Activated naive CD4-positive, alpha-beta T cell treated with anti-CD3 and anti-CD28 coated beads for 36 hours (primary cell): ENCODE measurements at regions of chr17 and their contacts with region 1.

Region 1: GRCh38 chr17:79839363-79840268 is at the start of gene CBX4:
- DNase-seq: peak; percentile 91
- H3K4me3 Mint-ChIP-seq: peak within 1 kb of the TSS; percentile 88
- H3K27ac Mint-ChIP-seq: peak within 1 kb of the TSS; percentile 78
- H3K4me1 Mint-ChIP-seq: peaks cover 58% of the 10 kb centered on the region
- H3K27me3 Mint-ChIP-seq: peaks cover 31% of the 10 kb centered on the region
- total RNA-seq, gene CBX4: 22.7 to 26.3 TPM

Region 2: DNA sequence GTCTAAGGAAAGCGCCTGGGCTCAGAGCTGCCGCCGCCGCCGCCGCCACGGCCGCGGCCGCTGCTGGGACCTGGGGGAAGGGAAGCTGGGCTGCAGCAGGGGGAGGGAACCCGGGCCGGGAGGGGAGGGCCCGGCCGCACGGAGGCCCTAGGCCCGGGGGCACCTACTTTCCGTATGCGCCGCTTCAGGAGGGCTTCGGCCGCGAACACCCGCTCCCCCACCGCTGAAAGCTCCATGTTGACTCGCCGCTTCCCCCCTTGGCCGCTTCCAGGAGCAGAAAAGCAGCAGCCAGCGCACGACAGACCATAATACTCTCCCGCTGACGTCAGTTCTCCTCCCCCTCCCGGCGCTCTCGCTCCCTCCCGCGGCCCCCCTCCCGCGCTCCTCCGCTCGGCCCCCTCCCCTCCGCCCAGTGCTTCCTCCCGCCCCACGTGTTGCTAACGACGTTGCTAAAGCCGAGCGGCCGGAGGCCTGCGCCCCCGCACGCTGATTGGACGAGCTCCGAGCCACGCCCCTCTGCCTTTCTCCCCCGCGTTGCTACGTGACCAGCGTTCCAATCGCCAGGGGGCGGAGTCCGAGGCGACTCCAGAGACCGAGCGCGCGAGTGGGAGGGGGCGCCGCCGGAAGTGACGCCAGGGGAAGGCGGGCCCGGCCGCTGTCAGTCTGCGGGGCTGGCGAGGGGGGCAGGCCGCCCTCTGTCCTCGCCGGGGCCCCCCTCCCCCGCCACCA is 42.7 kb before region 1 on chr17 and contains the start of gene CBX8:
- CTCF ChIA-PET with region 1: interaction called, 6 read pairs
- intact Hi-C with region 1: loop called (anchors 1 kb)
- DNase-seq: peak; percentile 100
- H3K4me3 Mint-ChIP-seq: peak within 1 kb of the TSS; percentile 77
- H3K27ac Mint-ChIP-seq: no peak within 1 kb of the TSS
- H3K4me1 Mint-ChIP-seq: peaks cover 37% of the 10 kb centered on the region
- H3K27me3 Mint-ChIP-seq: peaks cover 36% of the 10 kb centered on the region
- total RNA-seq, gene CBX8: 3.8 to 3.9 TPM

Region 3: DNA sequence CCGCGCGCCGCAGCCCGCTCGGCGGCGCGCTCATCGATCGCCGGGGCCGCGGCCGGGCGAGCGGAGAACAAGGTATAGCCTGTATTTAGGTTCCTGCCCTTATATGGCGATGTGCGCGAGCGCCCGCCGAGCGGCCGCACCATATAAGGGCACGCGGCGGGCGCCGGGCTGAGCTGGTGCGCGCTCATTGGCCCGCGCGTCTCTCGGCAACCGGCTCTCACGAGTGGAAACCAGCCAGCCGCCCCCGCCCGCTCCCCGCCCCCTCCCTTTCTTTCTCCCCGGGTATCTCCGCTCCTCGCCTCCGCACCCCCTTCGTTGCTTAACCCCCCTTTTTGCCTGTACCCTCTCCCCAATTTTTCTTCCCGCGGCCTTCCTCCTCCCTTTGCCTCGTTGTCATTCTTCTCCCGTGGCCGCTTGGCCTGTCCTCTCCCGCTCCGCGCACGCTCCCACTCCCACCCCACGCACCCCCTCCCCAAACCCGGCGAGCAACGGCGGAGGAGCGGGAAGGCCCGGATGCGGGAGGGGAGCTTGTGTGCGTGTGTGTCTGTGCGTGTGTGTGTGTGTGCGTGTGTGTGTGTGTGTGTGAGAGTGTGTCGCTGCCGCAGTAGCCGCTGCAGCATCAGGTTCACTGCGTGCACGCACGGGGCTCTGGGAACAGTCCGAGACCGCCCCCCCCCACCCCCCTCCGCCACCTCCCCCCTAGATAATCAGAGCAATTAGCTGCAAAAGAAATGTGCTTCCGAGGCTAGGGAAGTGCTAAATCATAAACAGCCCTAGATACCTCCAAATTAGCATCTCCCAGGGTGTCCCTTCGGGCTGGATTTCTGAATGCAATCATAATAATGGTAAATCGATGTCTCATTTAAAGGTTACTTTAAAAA is 29.2 kb before region 1 on chr17:
- CTCF ChIA-PET with region 1: interaction called, 7 read pairs
- intact Hi-C with region 1: loop called (anchors 1 kb)
- DNase-seq: peak; percentile 85
- H3K4me3 Mint-ChIP-seq: peak overlapping the region; percentile 29
- H3K27ac Mint-ChIP-seq: no peak overlapping the region
- H3K4me1 Mint-ChIP-seq: peaks cover 31% of the 10 kb centered on the region
- H3K27me3 Mint-ChIP-seq: peaks cover 65% of the 10 kb centered on the region

Region 4: DNA sequence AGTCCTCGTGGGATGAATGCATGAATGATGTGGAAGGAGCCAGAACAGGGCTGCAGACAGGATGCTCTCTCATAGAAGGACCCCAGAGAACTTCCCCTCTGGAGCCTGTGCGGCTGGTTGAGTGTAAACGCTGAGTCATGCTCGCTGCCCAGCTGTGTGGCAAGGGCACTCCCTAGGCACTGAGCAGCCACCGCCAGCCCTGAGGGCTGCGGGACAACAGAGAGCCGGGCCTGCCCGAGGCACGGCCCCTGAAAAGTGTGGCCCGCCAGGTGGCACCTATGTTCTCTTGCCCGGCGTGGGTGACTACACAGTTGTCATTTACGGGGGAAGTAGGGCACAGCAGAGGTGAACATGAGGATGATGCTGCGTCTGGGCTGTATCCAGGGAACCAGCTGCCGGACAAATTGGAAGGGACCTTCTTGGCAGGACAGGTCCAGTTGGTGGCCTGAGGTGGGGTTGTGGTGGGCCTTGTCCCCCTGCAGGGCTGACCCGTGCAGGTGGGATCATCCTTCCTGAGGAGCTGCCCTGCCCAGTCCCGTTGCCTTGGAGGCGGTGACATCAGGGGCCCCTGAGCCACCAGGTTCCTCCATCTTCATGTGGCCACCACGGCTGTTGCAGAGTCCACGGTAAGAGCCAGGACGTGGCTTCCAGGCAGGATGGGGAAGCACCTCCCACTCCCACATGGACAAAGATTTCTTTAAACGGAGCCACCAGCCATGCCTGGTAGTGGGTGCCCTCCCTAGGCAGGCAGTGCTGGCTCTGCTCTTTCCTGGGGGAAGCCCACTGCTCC is 94.4 kb after region 1 on chr17:
- CTCF ChIA-PET with region 1: no interaction called
- intact Hi-C with region 1: loop called (anchors 5 kb)
- DNase-seq: peak; percentile 46
- H3K4me3 Mint-ChIP-seq: no peak overlapping the region
- H3K27ac Mint-ChIP-seq: no peak overlapping the region
- H3K4me1 Mint-ChIP-seq: peaks cover 46% of the 10 kb centered on the region
- H3K27me3 Mint-ChIP-seq: peaks cover 15% of the 10 kb centered on the region

Region 5: GRCh38 chr17:79991140-79991923 is 151.7 kb after region 1 on chr17:
- CTCF ChIA-PET with region 1: interaction called, 3 read pairs
- intact Hi-C with region 1: loop called (anchors 1 kb)
- DNase-seq: peak; percentile 95
- H3K4me3 Mint-ChIP-seq: peak overlapping the region; percentile 86
- H3K27ac Mint-ChIP-seq: no peak overlapping the region
- H3K4me1 Mint-ChIP-seq: peaks cover 40% of the 10 kb centered on the region
- H3K27me3 Mint-ChIP-seq: no peaks in the 10 kb centered on the region